K562 (cell line): ENCODE measurements at regions of chr13 and their contacts with region 1.

Region 1: DNA sequence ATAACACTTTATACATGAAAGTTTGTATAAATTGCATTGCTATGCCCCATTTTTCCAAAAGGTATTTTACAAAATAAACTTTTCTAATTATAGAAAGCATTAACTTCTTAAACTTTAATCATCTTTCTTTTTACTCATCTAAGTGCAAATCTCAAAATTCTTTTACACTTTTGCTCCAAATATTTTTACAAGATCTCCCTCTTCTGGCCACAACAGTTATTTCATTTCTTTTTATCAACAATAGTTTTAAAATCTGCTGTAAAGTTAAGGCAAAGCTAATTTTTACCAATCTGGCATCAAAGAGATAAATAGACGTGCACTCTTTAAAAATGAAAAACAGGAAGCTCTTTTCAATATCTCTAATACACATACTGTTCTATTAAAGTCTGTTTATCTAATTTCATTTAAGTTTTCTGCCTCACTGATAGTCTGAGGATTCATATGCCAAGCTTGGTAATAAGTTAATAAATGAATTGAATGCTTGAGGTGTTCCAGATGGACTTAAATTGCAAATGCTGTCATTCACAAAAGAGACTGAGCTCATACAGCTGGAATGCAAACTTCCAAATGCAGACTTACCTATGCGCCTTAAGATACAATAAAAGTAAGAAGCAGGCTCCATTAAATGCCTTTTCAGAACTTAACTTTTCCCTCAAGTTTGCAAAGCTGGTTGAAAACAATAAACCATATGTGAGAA is 583.0 kb upstream of the ATXN8OS start:
- DNase-seq: peak in 1 of 4 experiments; percentile 0
- ATAC-seq: no peak
- H3K4me3 ChIP-seq: no peak overlapping the region
- H3K27ac ChIP-seq: no peak overlapping the region
- H3K4me1 ChIP-seq: no peaks in the 10 kb centered on the region
- H3K27me3 ChIP-seq: no peaks in the 10 kb centered on the region
- CTCF ChIP-seq: peak in 1 of 3 experiments; percentile 31; a peak in 2 of 6 replicates
- EP300 ChIP-seq: no peak
- POLR2A ChIP-seq: no peak
- RAD21 ChIP-seq: peak; percentile 28 to 49

Region 2: GRCh38 chr13:68810660-68811059 is 713.9 kb before region 1 on chr13:
- CTCF ChIA-PET with region 1: no interaction called
- POLR2A ChIA-PET with region 1: no interaction called
- in situ Hi-C with region 1: no loop called
- intact Hi-C with region 1: loop called (anchors 10 kb)
- DNase-seq: peak in 1 of 4 experiments; percentile 5
- ATAC-seq: 0 out of 3 replicates have a peak, but pooled peaks have one; percentile 47
- H3K4me3 ChIP-seq: no peak overlapping the region
- H3K27ac ChIP-seq: no peak overlapping the region
- H3K4me1 ChIP-seq: no peaks in the 10 kb centered on the region; a peak in 1 of 5 replicates
- H3K27me3 ChIP-seq: no peaks in the 10 kb centered on the region
- CTCF ChIP-seq: no peak
- EP300 ChIP-seq: no peak
- POLR2A ChIP-seq: no peak
- RAD21 ChIP-seq: peak in 1 of 2 experiments; percentile 9; a peak in 1 of 4 replicates

Region 3: DNA sequence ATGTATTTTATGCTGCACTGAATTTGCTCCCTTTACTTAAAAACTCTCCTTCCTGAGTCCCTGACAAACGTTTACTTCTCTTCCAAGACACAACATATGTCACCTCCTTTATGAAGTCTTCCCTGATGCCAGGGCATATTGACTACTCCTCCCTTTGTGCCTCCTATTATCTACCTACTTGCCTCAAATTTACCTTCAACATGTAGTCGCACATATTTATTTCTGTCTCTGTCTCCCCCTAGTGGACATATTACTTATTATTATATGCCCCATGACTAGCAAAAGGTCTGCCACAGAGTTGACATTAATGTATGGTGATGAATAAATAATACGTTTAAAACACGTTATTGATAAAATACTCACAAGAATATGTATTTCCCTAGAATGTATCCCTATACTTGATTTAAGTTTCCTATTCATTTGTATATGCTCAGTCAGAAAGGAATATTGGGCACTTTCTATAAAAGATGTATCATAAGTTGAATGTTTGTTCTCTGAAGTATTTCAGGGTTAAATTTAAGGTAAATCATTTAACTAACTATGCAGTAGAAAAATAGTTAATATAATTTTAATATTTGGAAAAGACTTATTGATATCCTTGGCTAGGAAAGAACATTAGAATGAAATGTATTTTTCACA is 332.7 kb after region 1 on chr13:
- CTCF ChIA-PET with region 1: no interaction called
- POLR2A ChIA-PET with region 1: no interaction called
- in situ Hi-C with region 1: loop called (anchors 25 kb)
- intact Hi-C with region 1: no loop called
- DNase-seq: peak; percentile 5 to 52 (median 16)
- ATAC-seq: 0 out of 3 replicates have a peak, but pooled peaks have one; percentile 47
- H3K4me3 ChIP-seq: no peak overlapping the region
- H3K27ac ChIP-seq: no peak overlapping the region
- H3K4me1 ChIP-seq: no peaks in the 10 kb centered on the region
- H3K27me3 ChIP-seq: no peaks in the 10 kb centered on the region
- CTCF ChIP-seq: peak in 2 of 3 experiments; percentile 35 to 40; a peak in 3 of 6 replicates
- EP300 ChIP-seq: no peak
- POLR2A ChIP-seq: no peak
- RAD21 ChIP-seq: peak; percentile 37 to 73

Region 4: GRCh38 chr13:70568571-70568970 is 1044.0 kb after region 1 on chr13:
- CTCF ChIA-PET with region 1: no interaction called
- POLR2A ChIA-PET with region 1: no interaction called
- in situ Hi-C with region 1: loop called (anchors 25 kb)
- intact Hi-C with region 1: no loop called
- DNase-seq: peak; percentile 5 to 27 (median 6)
- ATAC-seq: no peak
- H3K4me3 ChIP-seq: no peak overlapping the region
- H3K27ac ChIP-seq: no peak overlapping the region
- H3K4me1 ChIP-seq: no peaks in the 10 kb centered on the region
- H3K27me3 ChIP-seq: no peaks in the 10 kb centered on the region
- CTCF ChIP-seq: peak in 2 of 3 experiments; percentile 21 to 49; a peak in 2 of 6 replicates
- EP300 ChIP-seq: no peak
- POLR2A ChIP-seq: no peak
- RAD21 ChIP-seq: peak; percentile 71